IMR-90 (cell line): ENCODE measurements at regions of chr4 and their contacts with region 1.

Region 1: DNA sequence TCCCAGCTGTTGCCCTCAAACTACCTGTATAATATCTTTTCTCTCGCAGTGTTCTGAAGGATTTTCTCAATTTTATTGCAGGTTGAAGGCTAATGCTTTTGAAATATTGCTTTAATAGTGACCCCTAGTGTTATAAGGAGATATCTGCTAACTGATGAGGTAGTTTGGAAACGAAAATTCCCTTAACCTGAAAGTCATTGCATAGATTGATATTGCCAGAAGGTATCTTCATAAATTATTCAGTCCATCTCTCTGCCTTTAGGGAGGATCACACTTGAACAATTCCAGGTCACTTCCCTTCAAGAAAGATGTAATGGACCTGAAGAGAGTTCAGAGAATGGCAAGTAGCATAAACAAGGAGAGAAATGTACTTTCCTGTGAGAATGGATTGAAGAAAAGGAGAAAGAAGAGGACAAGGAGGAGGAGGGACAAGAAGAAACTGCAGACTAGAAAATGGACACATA is 44.1 kb downstream of the TIGD4 start:
- DNase-seq: peak; percentile 11
- ATAC-seq: peak; percentile 56; the same call in 1 of the 2 replicates
- H3K4me3 ChIP-seq: no peak overlapping the region
- H3K27ac ChIP-seq: no peak overlapping the region
- H3K4me1 ChIP-seq: no peaks in the 10 kb centered on the region
- H3K27me3 ChIP-seq: peaks cover 23% of the 10 kb centered on the region
- CTCF ChIP-seq: peak; percentile 56
- POLR2A ChIP-seq: no peak
- RAD21 ChIP-seq: peak; percentile 59

Region 2: GRCh38 chr4:152408514-152409327 is 326.7 kb before region 1 on chr4:
- CTCF ChIA-PET with region 1: no interaction called
- POLR2A ChIA-PET with region 1: no interaction called
- dilution Hi-C with region 1: no loop called
- in situ Hi-C with region 1: no loop called
- intact Hi-C with region 1: loop called (anchors 1 kb)
- DNase-seq: peak; percentile 50
- ATAC-seq: peak; percentile 79
- H3K4me3 ChIP-seq: no peak overlapping the region
- H3K27ac ChIP-seq: no peak overlapping the region
- H3K4me1 ChIP-seq: no peaks in the 10 kb centered on the region
- H3K27me3 ChIP-seq: no peaks in the 10 kb centered on the region
- CTCF ChIP-seq: peak; percentile 76
- POLR2A ChIP-seq: no peak
- RAD21 ChIP-seq: peak; percentile 71

Region 3: DNA sequence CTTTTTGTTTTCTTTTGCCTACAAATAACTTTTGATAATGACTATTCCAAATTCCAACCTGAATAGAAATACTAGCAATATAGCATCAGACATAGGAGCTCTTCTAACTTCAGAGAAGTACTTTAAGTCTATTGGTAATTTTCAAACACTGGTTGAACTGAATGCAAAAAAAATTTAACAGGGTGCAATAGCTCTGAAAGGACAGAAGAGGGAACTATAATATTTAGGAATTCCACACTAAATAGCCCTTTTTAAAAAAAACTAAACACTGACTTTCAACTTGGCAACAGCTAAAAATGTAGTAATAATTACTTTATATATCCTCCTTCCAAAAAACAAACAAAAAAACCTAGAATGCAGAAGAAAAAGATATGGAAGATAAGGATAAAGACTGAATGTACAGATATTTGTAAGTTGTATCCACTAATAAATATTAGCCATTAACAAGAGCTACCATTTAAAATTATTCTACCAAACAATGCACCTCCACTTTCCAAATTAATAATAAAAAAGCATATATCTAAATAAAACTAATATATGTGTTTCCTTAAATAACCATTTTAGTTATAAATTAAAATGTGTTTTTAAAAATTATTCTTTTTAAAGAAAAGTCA is 280.9 kb before region 1 on chr4:
- CTCF ChIA-PET with region 1: no interaction called
- POLR2A ChIA-PET with region 1: no interaction called
- dilution Hi-C with region 1: no loop called
- in situ Hi-C with region 1: no loop called
- intact Hi-C with region 1: loop called (anchors 1 kb)
- DNase-seq: peak; percentile 46
- ATAC-seq: peak; percentile 66
- H3K4me3 ChIP-seq: no peak overlapping the region
- H3K27ac ChIP-seq: no peak overlapping the region
- H3K4me1 ChIP-seq: peaks cover 5% of the 10 kb centered on the region; the same call in 1 of the 2 replicates
- H3K27me3 ChIP-seq: no peaks in the 10 kb centered on the region
- CTCF ChIP-seq: peak; percentile 77
- POLR2A ChIP-seq: no peak
- RAD21 ChIP-seq: peak; percentile 67

Region 4: GRCh38 chr4:152500800-152501434 is 234.5 kb before region 1 on chr4:
- CTCF ChIA-PET with region 1: no interaction called
- POLR2A ChIA-PET with region 1: no interaction called
- dilution Hi-C with region 1: no loop called
- in situ Hi-C with region 1: loop called (anchors 10 kb)
- intact Hi-C with region 1: loop called (anchors 5 kb)
- DNase-seq: peak; percentile 93
- ATAC-seq: peak; percentile 74
- H3K4me3 ChIP-seq: no peak overlapping the region
- H3K27ac ChIP-seq: no peak overlapping the region
- H3K4me1 ChIP-seq: peaks cover 3% of the 10 kb centered on the region; the same call in 1 of the 2 replicates
- H3K27me3 ChIP-seq: no peaks in the 10 kb centered on the region
- CTCF ChIP-seq: peak; percentile 83
- POLR2A ChIP-seq: no peak
- RAD21 ChIP-seq: peak; percentile 81